Activated T-helper 1 cell treated with anti-CD3 and anti-CD28 coated beads, Interleukin-12 subunit alpha, Interleukin-12 subunit beta, Interleukin-2, Interleukin-4 antibody, amounts not matched to agents 30 ng/mL and 10 ng/mL and 1 ng/mL, durations not matched to agents 14 hours and 24 hours and 36 hours (primary cell): ENCODE measurements at regions of chr12 and their contacts with region 1.

Region 1: DNA sequence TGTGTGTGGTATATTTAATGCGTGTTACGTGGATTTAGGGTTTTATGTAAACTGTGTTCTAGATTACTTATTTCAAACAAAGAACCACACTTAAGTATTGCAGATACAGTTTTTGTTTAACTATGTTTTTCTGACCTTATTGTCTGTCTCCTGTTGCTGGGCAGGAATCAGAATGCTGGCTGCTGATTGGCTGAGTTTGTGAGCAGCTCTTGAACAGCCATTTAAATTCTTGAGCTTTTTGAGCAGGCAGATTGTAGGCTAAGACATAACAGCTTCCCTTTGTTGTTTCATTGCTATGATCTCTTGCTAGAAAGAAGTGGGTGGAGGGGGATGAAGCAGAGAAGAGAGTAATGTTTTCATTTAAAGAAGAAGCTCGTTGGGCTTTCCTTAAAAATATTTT is 52.2 kb downstream of the ATF7IP start:
- DNase-seq: peak; percentile 60
- H3K4me3 Mint-ChIP-seq: peak overlapping the region; percentile 75
- H3K27ac Mint-ChIP-seq: peak overlapping the region; percentile 88
- H3K4me1 Mint-ChIP-seq: peaks cover 56% of the 10 kb centered on the region
- H3K27me3 Mint-ChIP-seq: no peaks in the 10 kb centered on the region

Region 2: GRCh38 chr12:14216405-14217294 is 201.1 kb before region 1 on chr12:
- intact Hi-C with region 1: loop called (anchors 1 kb)
- DNase-seq: no peak
- H3K4me3 Mint-ChIP-seq: peak overlapping the region; percentile 0
- H3K27ac Mint-ChIP-seq: no peak overlapping the region
- H3K4me1 Mint-ChIP-seq: peaks cover 15% of the 10 kb centered on the region
- H3K27me3 Mint-ChIP-seq: no peaks in the 10 kb centered on the region

Region 3: DNA sequence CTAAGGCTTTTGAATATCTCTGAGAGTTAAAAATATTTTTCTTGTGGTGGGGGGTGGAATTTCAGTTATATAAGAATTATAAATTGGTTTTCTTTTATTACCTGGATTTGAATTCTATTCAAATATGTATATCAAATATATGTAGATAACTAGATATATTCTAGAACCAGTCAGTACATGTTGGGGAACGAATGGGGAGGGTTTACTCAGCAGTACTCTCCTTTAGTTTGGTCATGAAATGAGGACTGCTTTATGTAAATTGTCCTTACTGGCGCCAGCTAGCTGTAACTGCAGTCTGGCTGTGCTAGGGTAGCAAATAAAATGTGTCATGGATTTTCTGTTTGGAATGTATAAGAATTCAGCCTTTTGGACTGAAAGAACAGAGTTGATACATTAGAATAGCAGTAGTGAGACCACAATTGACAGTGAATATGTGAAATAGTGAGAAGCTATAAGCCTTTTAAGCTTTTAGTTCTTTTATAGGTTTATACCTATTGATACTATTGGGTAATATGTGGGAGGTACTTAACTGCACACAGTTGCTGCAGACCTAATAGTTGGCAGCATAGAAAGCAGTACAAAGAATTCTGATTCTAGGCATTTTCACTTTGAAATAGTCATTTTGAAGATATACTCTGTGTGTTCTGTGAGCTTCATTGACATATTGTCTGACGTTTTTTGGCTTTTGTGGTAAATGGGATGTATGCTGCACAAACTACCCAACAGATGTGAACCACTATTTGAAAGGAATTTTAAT is 23.2 kb before region 1 on chr12:
- intact Hi-C with region 1: loop called (anchors 1 kb)
- DNase-seq: peak; percentile 38
- H3K4me3 Mint-ChIP-seq: peak overlapping the region; percentile 64
- H3K27ac Mint-ChIP-seq: peak overlapping the region; percentile 89
- H3K4me1 Mint-ChIP-seq: peaks cover 87% of the 10 kb centered on the region
- H3K27me3 Mint-ChIP-seq: no peaks in the 10 kb centered on the region

Region 4: DNA sequence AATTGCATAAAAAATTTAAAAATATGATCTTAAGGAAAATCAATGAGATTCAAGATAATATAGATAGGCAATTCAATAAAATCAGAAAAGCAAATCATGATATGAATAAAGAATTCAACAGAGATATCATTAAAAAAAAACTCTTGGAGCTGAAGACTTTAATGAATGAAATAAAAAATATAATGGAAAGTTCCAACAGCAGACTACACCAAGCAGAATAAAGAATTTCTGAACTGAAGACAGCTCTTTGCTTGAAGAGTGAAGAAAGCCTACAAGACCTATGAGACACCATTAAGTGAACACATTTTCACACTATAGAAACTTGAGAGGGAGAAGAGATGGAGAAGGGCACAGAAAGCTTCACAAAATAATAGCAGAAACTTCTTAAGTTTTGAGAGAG is 104.1 kb after region 1 on chr12:
- intact Hi-C with region 1: no loop called
- DNase-seq: no peak
- H3K4me3 Mint-ChIP-seq: no peak overlapping the region
- H3K27ac Mint-ChIP-seq: no peak overlapping the region
- H3K4me1 Mint-ChIP-seq: no peaks in the 10 kb centered on the region
- H3K27me3 Mint-ChIP-seq: no peaks in the 10 kb centered on the region

Region 5: GRCh38 chr12:14716848-14717444 is 299.2 kb after region 1 on chr12:
- intact Hi-C with region 1: no loop called
- DNase-seq: peak; percentile 34
- H3K4me3 Mint-ChIP-seq: no peak overlapping the region
- H3K27ac Mint-ChIP-seq: no peak overlapping the region
- H3K4me1 Mint-ChIP-seq: no peaks in the 10 kb centered on the region
- H3K27me3 Mint-ChIP-seq: peaks cover 9% of the 10 kb centered on the region